ENCODE measurements at regions of chr11 and their contacts with region 1.

Region 1: GRCh38 chr11:20599221-20600019 is at the start of gene SLC6A5:
- DNase-seq: peak; percentile 30 to 59 (median 32)
- ATAC-seq: no peak
- H3K4me3 ChIP-seq: no peak within 1 kb of the TSS
- H3K27ac ChIP-seq: no peak within 1 kb of the TSS
- H3K4me1 ChIP-seq: peaks cover 6% of the 10 kb centered on the region
- H3K27me3 ChIP-seq: peaks cover 0 to 37% of the 10 kb centered on the region in 2 donors
- CTCF ChIP-seq: no peak
- POLR2A ChIP-seq: no peak
- total RNA-seq, gene SLC6A5: not detected

Region 2: DNA sequence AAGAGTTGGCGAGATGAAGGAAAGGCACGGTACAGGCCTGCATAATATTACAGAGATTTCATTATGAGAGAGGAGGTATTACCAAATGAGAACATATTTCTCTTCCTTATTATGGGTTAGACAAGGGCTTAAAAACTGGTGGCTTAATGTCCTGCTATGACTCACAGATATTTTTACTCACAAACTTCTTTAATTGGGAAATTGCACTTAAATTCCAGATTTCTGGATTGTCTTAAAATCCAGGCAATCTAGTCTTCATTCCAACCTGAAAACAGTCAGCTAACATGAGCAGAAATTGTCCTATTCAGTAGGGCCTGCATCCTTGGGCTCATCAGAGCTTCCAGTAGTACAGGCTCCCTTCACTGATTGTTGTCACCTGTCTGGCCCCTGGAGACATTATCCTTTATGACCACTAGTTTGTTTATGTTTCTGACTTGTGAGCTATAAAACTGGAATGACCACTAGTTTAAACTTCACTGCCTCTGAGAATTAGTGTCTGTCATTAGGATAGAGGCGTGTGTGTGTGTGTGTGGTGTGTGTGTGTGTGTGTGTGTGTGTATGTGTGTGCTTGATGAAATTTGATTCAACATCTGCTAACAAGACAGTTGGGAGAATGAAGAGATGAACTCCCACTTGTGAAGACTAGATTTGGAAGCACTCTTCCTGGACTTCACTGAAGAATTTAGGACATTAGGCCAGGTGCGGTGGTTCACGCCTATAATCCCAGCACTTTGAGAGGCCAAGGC is 464.3 kb before region 1 on chr11:
- intact Hi-C with region 1: loop called (anchors 5 kb)
- DNase-seq: no peak
- ATAC-seq: no peak
- H3K4me3 ChIP-seq: no peak overlapping the region
- H3K27ac ChIP-seq: no peak overlapping the region
- H3K4me1 ChIP-seq: peaks cover 7% of the 10 kb centered on the region
- H3K27me3 ChIP-seq: no peaks in the 10 kb centered on the region
- CTCF ChIP-seq: no peak
- POLR2A ChIP-seq: no peak

Region 3: GRCh38 chr11:20634044-20634443 is 34.6 kb after region 1 on chr11:
- intact Hi-C with region 1: no loop called
- DNase-seq: no peak
- ATAC-seq: no peak
- H3K4me3 ChIP-seq: no peak overlapping the region
- H3K27ac ChIP-seq: no peak overlapping the region
- H3K4me1 ChIP-seq: no peaks in the 10 kb centered on the region
- H3K27me3 ChIP-seq: no peaks in the 10 kb centered on the region
- CTCF ChIP-seq: no peak
- POLR2A ChIP-seq: no peak

Region 4: DNA sequence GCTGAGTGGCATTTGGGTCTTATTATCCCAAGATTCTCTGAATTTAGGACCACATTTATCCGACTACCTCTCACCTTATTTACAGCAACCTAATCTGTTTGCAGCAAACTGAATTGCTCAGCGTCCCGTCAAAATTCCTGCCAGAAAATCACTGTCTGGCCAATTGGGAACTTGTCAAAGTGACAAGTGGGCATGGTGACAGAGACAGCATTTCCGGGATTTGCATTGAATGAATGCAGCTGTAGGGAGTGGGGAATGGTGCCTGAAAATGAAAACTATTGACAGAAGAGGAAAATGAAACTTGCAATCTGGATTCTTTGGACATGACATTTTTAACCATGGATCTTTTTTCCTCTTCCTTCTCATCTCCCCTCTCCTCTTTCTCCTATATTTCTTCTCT is 183.8 kb after region 1 on chr11:
- intact Hi-C with region 1: no loop called
- DNase-seq: no peak
- ATAC-seq: no peak
- H3K4me3 ChIP-seq: no peak overlapping the region
- H3K27ac ChIP-seq: no peak overlapping the region
- H3K4me1 ChIP-seq: no peaks in the 10 kb centered on the region
- H3K27me3 ChIP-seq: no peaks in the 10 kb centered on the region
- CTCF ChIP-seq: no peak
- POLR2A ChIP-seq: no peak